HEK293T (cell line): ENCODE measurements at regions of chr1 and their contacts with region 1.

Region 1: GRCh38 chr1:2044510-2045319 is 5.5 kb upstream of the PRKCZ start:
- DNase-seq: peak; percentile 85

Region 2: DNA sequence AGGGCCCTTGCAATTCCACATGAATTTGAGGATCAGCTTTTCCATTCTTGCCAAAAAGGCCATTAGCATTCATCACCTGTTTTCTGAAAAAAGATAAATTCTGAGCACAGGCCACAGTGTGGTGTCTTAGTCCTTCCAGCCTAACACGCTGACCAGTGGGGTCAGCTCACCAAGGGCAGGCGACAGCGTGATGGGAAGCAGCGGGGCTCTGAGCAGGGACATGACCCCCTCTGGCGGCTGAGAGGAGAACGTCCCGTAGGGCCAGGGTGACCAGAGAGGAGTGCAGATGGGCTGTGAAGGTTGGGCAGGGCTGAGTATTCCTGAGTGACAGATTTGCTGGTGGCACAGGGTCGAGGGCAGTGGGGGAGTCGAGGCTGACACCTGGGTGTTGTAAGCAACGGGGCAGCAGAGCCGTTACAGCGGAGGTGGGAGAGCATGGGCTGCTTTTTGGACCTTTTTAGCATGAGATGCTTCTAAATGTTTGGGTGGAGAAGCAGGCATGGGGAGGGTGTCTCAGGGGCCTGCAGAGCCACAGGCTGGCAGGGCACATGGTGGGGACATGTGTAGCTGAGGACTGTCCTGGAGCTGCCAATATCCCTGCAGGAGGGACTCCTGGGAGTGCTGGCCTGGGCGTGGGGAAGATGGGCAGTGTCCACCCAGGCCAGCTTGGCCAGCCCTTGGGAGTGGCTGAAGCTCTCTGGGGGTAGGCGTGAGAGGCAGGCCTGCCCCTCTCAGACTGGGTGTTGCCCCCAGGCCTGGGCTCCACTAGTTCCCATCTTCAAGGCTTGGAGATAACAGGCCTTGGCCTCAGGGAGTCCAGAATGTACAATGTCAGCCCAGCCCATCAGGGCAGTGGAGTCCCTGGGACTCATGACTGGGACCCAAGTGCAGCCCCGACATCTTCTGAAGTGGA is 138.3 kb before region 1 on chr1:
- CTCF ChIA-PET with region 1: interaction called, 11 read pairs
- POLR2A ChIA-PET with region 1: interaction called, 9 read pairs
- DNase-seq: peak; percentile 77

Region 3: DNA sequence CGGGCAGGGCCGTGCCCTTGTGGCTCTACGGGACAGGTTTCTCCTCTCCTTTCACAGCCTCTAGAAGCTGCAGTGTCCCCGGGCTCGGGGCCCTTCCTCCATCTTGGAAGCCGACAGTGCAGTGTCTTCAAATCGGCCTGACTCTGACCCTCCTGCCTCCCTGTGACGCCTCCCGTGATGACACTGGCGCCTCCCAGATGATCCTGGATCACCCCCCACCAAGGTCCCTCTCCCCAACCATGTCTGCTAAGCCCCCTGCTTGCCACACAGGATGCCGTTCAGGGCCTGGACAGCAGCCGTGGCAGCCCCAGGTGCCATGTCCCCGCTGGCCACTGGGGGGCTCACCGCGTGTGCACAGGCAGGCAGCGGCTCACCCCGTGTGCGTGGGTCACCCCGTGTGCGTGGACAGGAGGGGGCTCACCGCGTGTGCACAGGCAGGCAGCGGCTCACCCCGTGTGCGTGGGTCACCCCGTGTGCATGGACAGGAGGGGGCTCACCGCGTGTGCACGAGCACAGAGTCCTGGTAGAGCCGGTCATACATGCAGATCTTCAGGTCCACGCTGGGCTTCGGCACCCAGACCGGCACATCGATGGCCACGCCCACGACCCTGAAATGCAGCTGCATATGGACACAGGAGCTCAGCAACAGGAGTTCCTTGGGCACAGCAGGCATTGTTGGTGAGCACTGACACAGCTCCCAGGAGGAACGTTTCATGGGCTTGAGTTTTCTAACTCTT is 100.7 kb before region 1 on chr1:
- CTCF ChIA-PET with region 1: interaction called, 18 read pairs
- POLR2A ChIA-PET with region 1: interaction called, 5 read pairs
- DNase-seq: peak; percentile 75

Region 4: GRCh38 chr1:1959840-1960479 is 84.8 kb before region 1 on chr1:
- CTCF ChIA-PET with region 1: interaction called, 62 read pairs
- POLR2A ChIA-PET with region 1: interaction called, 6 read pairs
- DNase-seq: peak; percentile 93

Region 5: DNA sequence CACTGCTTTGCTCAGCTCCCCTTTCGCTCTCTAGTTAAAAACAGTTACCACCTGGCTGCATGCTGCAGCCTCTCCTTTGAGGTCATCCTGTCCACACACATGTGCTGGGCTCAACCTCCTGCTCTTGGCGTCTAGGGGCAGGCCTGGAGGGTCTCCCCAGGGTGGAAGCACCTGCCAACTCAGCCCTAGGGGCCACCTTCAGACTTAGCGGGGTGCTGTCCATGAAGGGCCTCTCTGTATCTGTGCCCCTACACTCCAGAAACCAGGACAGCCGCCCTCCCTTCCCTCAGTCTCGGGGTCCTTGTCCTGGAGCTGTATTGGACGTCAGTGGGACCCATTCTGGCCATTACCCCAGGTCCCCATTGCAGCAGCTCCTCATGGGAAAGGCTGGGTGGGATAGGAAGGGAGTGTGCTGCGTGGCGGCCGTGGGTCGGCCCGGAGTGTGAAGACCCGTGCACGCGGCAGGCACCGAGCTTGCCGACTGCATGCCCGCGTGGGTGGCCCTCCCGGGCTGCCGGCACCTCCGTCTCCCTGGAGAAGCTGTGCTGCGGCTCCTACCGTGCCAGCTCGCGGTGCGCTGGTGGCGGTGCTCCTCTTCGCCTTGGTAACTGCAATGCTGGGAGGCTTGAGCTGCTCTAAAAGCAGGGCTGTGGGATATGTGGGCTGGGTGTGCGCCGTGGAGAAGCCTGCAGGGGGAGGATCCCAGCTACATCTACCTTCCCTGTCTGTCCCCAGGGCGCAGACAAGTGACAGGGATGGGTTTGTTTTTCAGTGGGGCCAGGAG is 23.4 kb before region 1 on chr1:
- CTCF ChIA-PET with region 1: interaction called, 10 read pairs
- POLR2A ChIA-PET with region 1: no interaction called
- DNase-seq: no peak